GM10248 (cell line): ENCODE measurements at regions of chr15 and their contacts with region 1.

Region 1: DNA sequence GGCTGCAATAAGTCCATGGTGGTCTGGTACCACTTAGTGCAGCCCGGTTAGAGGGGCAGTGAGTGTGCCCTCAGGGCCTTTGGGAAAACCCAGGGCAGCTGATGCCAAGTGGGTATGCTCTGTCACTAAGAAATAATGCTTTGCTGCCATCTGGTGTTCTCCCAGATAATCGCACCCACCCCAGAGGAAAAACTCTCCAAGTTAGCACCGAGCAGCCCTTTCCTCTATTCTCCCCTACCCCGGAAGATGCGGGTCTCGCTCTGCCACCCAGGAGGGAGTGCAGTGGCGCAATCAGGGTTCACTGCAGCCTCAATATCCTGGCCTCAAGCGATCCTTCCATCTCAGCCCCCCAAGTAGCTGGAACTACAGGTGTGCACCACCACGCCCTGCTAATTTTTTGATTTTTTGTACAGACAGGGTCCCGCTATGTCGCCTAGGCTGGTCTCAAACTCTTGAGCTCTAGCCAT is 21.3 kb upstream of the DAPK2 start:
- DNase-seq: peak; percentile 78
- CTCF ChIP-seq: peak; percentile 70

Region 2: DNA sequence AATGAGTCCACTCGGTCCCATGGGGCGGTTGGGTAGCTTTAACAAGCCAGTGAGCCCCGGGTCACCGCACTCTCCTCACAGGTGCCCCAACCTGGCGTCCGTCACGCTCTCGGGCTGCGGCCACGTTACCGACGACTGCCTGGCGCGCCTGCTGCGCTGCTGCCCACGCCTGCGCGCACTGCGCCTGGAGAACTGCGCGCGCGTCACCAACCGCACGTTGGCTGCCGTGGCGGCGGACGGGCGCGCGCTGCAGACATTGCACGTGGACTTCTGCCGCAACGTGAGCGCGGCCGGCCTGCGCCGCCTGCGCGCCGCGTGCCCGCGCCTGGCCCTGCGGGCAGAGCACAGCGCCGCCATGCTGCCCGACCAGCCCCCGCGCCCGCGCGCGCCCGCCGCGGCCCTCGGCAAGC is 467.0 kb before region 1 on chr15:
- CTCF ChIA-PET with region 1: interaction called, 86 read pairs
- POLR2A ChIA-PET with region 1: interaction called, 7 read pairs
- DNase-seq: peak; percentile 91
- CTCF ChIP-seq: peak; percentile 37

Region 3: DNA sequence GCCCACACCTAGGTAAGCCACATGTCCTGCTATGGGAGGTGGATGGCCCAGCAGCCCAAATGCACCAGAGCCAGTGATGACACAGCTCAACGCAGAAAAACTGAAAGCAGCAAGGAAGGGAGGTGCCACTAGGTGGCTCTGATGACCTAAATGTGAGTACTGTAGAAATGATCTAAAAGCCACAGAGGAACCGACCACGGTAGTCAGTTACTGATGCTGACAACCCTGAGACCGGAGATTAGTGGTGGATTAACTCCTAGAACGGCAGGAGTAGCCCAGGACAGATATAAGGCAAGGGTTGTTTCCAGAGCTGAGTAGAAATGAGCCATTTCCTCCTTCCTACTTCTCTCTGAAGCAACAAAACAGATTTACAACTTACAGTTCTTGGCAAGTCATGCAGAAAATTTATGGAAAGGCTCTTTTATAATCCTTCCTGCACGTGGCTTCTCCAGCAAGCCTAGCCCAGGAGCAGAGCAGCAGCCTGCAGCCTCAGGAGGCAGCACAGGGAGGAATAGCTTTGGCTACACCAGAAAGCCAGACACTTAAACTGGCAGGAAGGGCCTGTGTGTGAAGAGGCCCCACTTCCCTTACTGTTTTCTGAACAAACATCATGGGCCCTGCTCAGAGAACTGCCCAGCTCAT is 457.3 kb before region 1 on chr15:
- CTCF ChIA-PET with region 1: interaction called, 86 read pairs
- POLR2A ChIA-PET with region 1: no interaction called
- DNase-seq: peak; percentile 81
- CTCF ChIP-seq: peak; percentile 73

Region 4: DNA sequence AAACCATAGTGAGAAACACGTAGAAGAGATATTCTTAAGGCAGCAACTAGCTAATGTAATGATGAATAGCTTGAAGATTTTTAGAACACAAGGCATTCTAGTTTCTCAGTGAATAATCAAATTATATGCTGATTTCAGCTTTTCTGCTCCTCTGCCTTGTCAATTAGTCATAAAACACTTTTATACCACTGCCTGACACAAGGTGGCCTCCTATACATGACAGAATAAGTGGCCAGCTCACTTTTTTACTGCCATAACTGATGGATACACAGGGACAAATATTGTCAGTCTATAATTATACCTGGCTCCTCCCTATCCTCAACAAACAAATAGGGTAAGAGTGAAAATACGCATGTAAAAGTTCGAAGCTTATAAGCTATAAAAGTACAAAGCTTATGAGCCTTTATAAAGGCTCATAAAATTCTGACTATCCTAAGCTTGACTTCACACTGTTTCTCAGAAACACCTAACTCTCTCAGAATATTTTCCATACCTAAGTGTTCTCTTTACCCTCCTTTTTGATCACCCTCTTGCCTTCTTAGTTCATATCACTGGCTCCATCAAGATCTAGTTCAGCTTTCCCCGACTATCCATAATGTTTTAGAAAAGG is 315.4 kb before region 1 on chr15:
- CTCF ChIA-PET with region 1: interaction called, 104 read pairs
- POLR2A ChIA-PET with region 1: no interaction called
- DNase-seq: peak; percentile 55
- CTCF ChIP-seq: peak; percentile 60

Region 5: GRCh38 chr15:63891079-63891767 is 176.4 kb before region 1 on chr15:
- CTCF ChIA-PET with region 1: interaction called, 12 read pairs
- POLR2A ChIA-PET with region 1: no interaction called
- DNase-seq: peak; percentile 69
- CTCF ChIP-seq: peak; percentile 87

Region 6: GRCh38 chr15:63896336-63897115 is 171.1 kb before region 1 on chr15:
- CTCF ChIA-PET with region 1: interaction called, 12 read pairs
- POLR2A ChIA-PET with region 1: no interaction called
- DNase-seq: peak; percentile 83
- CTCF ChIP-seq: no peak

Region 7: GRCh38 chr15:63994073-63994600 is 73.5 kb before region 1 on chr15:
- CTCF ChIA-PET with region 1: no interaction called
- POLR2A ChIA-PET with region 1: no interaction called
- DNase-seq: no peak
- CTCF ChIP-seq: no peak

Region 8: GRCh38 chr15:64093627-64094417 is 26.2 kb after region 1 on chr15 and contains the start of gene CIAO2A:
- CTCF ChIA-PET with region 1: interaction called, 28 read pairs
- POLR2A ChIA-PET with region 1: no interaction called
- DNase-seq: peak; percentile 88
- CTCF ChIP-seq: no peak

Region 9: GRCh38 chr15:64138331-64138941 is 70.8 kb after region 1 on chr15:
- CTCF ChIA-PET with region 1: no interaction called
- POLR2A ChIA-PET with region 1: no interaction called
- DNase-seq: no peak
- CTCF ChIP-seq: no peak